HEK293 (cell line): ENCODE measurements at regions of chr19 and their contacts with region 1.

Region 1: GRCh38 chr19:52189735-52190486 is at the start of gene PPP2R1A:
- H3K4me3 ChIP-seq: peak within 1 kb of the TSS; percentile 99
- H3K27ac ChIP-seq: peak within 1 kb of the TSS; percentile 95
- H3K4me1 ChIP-seq: peaks cover 12% of the 10 kb centered on the region; the same call in 1 of the 2 replicates
- CTCF ChIP-seq: 0 out of 2 replicates have a peak, but pooled peaks have one; percentile 10

Region 2: DNA sequence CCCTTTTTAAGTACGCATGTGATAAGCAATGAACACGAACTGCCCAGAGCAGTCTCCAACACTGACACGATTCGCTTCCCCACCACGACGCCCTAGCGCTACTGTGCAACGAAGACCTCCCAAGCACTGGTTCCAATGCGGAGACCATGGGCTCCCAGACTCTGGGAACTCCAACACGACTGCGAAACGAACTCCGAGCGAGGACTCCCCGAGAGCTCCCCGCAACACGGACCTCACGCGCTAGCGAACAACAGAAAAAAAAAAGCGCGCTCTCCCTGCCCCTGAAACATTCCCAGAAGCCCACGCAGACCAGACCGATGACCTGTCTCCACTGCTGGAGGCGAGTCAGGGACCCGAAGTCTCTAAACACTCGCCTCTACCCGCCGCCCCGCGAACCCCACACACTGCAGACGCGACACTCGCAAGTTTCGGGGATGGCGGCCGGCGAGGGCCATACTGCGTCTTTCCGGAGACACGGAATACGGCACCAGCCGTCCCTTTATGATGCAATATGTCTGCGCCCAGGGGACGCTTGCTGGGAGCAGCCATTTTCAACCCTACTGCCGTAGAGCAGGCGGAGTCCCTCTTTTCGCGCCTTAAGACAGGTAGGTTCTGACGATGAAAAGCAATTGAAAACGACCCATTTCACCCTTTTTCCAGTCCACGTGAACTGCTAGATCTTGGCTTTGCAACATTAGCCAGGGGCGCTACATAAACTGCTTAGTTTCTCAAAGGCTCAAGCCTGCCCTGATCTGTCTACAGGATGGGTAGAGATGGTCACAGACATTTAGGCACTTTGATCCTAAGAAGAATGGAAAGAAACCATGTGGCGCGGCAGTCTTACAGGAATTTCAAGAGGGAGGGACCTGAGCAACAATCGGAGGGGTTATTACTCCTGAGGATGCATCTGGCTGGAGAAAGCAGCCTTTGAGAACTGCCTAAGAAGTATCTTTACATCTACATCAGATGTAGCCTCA is 302.1 kb before region 1 on chr19 and contains the start of gene ZNF577:
- CTCF ChIA-PET with region 1: no interaction called
- POLR2A ChIA-PET with region 1: no interaction called
- H3K4me3 ChIP-seq: peak within 1 kb of the TSS; percentile 65
- H3K27ac ChIP-seq: peak within 1 kb of the TSS; percentile 3; the same call in 1 of the 2 replicates
- H3K4me1 ChIP-seq: no peaks in the 10 kb centered on the region
- CTCF ChIP-seq: no peak

Region 3: GRCh38 chr19:52034051-52034728 is 155.7 kb before region 1 on chr19:
- CTCF ChIA-PET with region 1: no interaction called
- POLR2A ChIA-PET with region 1: no interaction called
- H3K4me3 ChIP-seq: no peak overlapping the region
- H3K27ac ChIP-seq: no peak overlapping the region
- H3K4me1 ChIP-seq: no peaks in the 10 kb centered on the region
- CTCF ChIP-seq: no peak

Region 4: DNA sequence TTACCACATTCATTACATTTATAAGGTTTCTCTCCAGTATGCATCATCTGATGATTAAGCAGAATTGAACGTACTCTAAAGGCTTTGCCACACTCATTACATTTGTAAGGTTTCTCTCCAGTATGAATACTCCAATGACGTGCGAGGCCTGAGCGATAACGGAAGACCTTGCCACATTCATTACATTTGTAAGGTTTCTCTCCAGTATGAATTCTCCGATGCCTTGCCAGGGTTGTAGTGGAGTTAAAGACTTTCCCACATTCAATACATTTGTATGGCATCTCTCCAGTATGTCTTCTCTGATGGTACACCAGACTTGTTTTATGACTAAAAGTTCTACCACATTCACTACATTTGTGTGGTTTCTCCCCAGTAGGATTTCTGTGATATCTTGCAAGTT is 124.5 kb before region 1 on chr19:
- CTCF ChIA-PET with region 1: no interaction called
- POLR2A ChIA-PET with region 1: no interaction called
- H3K4me3 ChIP-seq: no peak overlapping the region
- H3K27ac ChIP-seq: no peak overlapping the region
- H3K4me1 ChIP-seq: no peaks in the 10 kb centered on the region
- CTCF ChIP-seq: no peak

Region 5: GRCh38 chr19:52139252-52140031 is 50.5 kb before region 1 on chr19 and contains the start of gene ZNF616:
- CTCF ChIA-PET with region 1: interaction called, 3 read pairs
- POLR2A ChIA-PET with region 1: interaction called, 17 read pairs
- H3K4me3 ChIP-seq: peak within 1 kb of the TSS; percentile 57
- H3K27ac ChIP-seq: peak within 1 kb of the TSS; percentile 73
- H3K4me1 ChIP-seq: no peaks in the 10 kb centered on the region
- CTCF ChIP-seq: peak; percentile 96

Region 6: GRCh38 chr19:52171321-52172169 is 18.4 kb before region 1 on chr19 and contains the start of gene ZNF836:
- CTCF ChIA-PET with region 1: interaction called, 6 read pairs
- POLR2A ChIA-PET with region 1: interaction called, 29 read pairs
- H3K4me3 ChIP-seq: peak within 1 kb of the TSS; percentile 81
- H3K27ac ChIP-seq: peak within 1 kb of the TSS; percentile 34; the same call in 1 of the 2 replicates
- H3K4me1 ChIP-seq: peaks cover 6% of the 10 kb centered on the region
- CTCF ChIP-seq: no peak

Region 7: DNA sequence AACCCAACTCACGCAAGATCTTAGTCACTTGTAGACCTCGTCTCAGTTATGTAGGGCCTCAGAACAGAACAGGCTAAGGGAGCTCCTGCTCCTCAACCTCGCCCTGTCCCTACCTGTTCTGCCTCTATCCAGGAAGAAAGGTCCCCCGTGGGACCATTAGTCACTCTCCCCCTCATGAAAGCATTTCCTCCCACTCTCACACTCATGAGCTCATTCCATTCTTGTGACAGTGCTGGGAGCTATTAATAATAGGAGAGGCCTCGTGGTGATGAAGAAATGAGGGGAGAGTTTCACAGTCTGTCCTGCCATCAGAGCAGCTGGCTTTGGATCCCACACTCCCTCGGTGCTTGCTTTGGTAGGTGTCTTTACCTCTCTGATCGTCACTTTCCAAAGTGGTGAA is 10.1 kb after region 1 on chr19:
- CTCF ChIA-PET with region 1: no interaction called
- POLR2A ChIA-PET with region 1: interaction called, 25 read pairs
- H3K4me3 ChIP-seq: no peak overlapping the region
- H3K27ac ChIP-seq: no peak overlapping the region
- H3K4me1 ChIP-seq: no peaks in the 10 kb centered on the region
- CTCF ChIP-seq: no peak

Region 8: DNA sequence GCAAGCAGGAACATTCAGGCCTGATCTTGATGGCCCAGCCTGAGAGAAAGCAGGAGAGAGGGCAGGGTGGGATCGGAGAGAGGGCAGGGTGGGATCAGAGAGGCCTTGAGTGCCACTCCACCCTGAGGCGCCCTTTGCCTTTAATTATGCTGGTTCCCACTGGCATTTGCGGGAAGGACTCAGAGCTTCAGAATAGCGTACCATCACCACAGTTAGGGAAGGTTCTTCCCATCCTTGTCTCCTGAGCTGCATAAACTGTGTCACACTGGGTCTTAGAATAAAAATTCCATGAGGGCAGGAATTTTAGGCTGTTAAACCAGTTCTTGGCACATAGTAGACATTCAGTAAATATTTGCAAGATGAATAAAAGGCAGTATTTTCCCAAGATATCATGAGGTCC is 24.3 kb after region 1 on chr19:
- CTCF ChIA-PET with region 1: no interaction called
- POLR2A ChIA-PET with region 1: interaction called, 14 read pairs
- H3K4me3 ChIP-seq: no peak overlapping the region
- H3K27ac ChIP-seq: no peak overlapping the region
- H3K4me1 ChIP-seq: no peaks in the 10 kb centered on the region
- CTCF ChIP-seq: no peak